HCT116 (cell line): ENCODE measurements at regions of chr13 and their contacts with region 1.

Region 1: DNA sequence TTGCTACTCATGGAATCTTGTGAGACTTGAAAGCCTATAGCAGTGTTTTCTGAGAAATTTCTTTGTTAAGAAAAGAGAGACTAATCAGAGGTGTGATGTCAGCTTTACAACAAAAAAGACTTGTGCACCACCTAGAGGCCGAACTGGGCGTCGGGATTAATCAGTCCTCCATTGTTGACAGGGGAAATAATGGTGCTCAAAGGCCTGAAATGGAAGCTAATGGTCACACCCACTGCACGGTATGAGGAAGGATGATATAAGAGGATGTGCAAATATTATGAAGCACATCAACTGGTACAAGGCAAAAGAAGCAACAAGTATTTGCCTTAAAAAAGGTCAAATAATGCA is 480.2 kb upstream of the MIR17HG start:
- DNase-seq: peak; percentile 33
- ATAC-seq: peak; percentile 86
- H3K4me3 ChIP-seq: no peak overlapping the region
- H3K27ac ChIP-seq: no peak overlapping the region
- H3K4me1 ChIP-seq: no peaks in the 10 kb centered on the region
- H3K27me3 ChIP-seq: no peaks in the 10 kb centered on the region
- CTCF ChIP-seq: peak; percentile 18 to 65 (median 52); a peak in 3 of 6 replicates
- POLR2A ChIP-seq: no peak
- RAD21 ChIP-seq: peak; percentile 63

Region 2: DNA sequence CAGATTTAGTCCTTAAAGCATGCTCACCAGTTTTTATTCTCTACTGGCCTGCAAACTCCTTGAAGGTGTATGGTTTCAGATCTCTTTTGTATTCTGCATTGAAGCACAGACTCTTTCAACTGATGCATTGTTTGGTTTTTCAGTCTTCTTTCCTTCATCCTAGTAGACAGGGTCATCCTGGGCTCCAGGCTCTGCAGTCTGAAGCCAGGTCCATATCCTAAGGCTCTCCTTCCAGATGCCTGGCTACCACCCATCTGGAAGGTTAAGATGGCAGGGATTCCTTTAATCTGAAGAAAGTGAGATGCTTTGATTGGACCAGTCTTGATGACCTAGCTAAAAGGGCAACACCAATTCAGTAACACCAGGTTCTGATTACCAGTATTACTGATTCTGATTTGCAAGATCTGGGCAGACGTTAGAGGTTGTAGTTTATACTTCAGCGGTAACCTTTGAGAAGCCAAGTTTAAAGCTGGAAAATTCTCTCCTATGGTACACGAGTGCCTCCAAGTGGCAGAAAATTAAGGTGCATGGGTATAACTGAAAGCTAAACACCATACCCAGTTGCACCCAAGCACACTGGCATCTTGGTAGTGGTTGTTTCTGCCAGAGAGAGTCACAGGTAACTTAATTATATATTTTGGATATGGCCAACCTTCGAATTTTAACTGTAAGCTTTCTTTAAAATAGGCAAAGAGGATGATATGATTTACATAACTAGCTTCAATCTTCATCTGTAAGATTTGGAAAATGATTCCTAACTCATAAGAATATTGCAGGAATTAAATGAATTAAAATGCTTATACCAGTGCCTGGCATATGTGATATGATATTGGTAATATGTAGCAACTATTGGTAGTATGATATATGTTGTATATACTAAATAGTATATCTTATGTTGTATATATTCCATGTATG is 1171.7 kb before region 1 on chr13:
- CTCF ChIA-PET with region 1: interaction called, 6 read pairs
- POLR2A ChIA-PET with region 1: no interaction called
- RAD21 ChIA-PET with region 1: no interaction called
- intact Hi-C with region 1: loop called (anchors 5 kb)
- DNase-seq: peak; percentile 22
- ATAC-seq: peak; percentile 68
- H3K4me3 ChIP-seq: no peak overlapping the region
- H3K27ac ChIP-seq: no peak overlapping the region
- H3K4me1 ChIP-seq: no peaks in the 10 kb centered on the region
- H3K27me3 ChIP-seq: no peaks in the 10 kb centered on the region
- CTCF ChIP-seq: peak; percentile 11 to 68 (median 56); a peak in 3 of 6 replicates
- POLR2A ChIP-seq: no peak
- RAD21 ChIP-seq: peak; percentile 61

Region 3: GRCh38 chr13:89740994-89741685 is 1126.2 kb before region 1 on chr13:
- CTCF ChIA-PET with region 1: no interaction called
- POLR2A ChIA-PET with region 1: no interaction called
- RAD21 ChIA-PET with region 1: no interaction called
- intact Hi-C with region 1: no loop called
- DNase-seq: no peak
- ATAC-seq: no peak
- H3K4me3 ChIP-seq: no peak overlapping the region
- H3K27ac ChIP-seq: no peak overlapping the region
- H3K4me1 ChIP-seq: no peaks in the 10 kb centered on the region
- H3K27me3 ChIP-seq: no peaks in the 10 kb centered on the region
- CTCF ChIP-seq: no peak
- POLR2A ChIP-seq: no peak
- RAD21 ChIP-seq: no peak

Region 4: GRCh38 chr13:89940383-89940782 is 926.9 kb before region 1 on chr13:
- CTCF ChIA-PET with region 1: no interaction called
- POLR2A ChIA-PET with region 1: no interaction called
- RAD21 ChIA-PET with region 1: no interaction called
- intact Hi-C with region 1: loop called (anchors 10 kb)
- DNase-seq: no peak
- ATAC-seq: no peak
- H3K4me3 ChIP-seq: no peak overlapping the region
- H3K27ac ChIP-seq: no peak overlapping the region
- H3K4me1 ChIP-seq: no peaks in the 10 kb centered on the region
- H3K27me3 ChIP-seq: no peaks in the 10 kb centered on the region
- CTCF ChIP-seq: no peak
- POLR2A ChIP-seq: no peak
- RAD21 ChIP-seq: no peak

Region 5: GRCh38 chr13:90293793-90294361 is 573.4 kb before region 1 on chr13:
- CTCF ChIA-PET with region 1: no interaction called
- POLR2A ChIA-PET with region 1: no interaction called
- RAD21 ChIA-PET with region 1: no interaction called
- intact Hi-C with region 1: no loop called
- DNase-seq: no peak
- ATAC-seq: no peak
- H3K4me3 ChIP-seq: no peak overlapping the region
- H3K27ac ChIP-seq: no peak overlapping the region
- H3K4me1 ChIP-seq: no peaks in the 10 kb centered on the region
- H3K27me3 ChIP-seq: no peaks in the 10 kb centered on the region
- CTCF ChIP-seq: no peak
- POLR2A ChIP-seq: no peak
- RAD21 ChIP-seq: no peak

Region 6: GRCh38 chr13:90552702-90553101 is 314.6 kb before region 1 on chr13:
- CTCF ChIA-PET with region 1: no interaction called
- POLR2A ChIA-PET with region 1: no interaction called
- RAD21 ChIA-PET with region 1: no interaction called
- intact Hi-C with region 1: no loop called
- DNase-seq: no peak
- ATAC-seq: no peak
- H3K4me3 ChIP-seq: no peak overlapping the region
- H3K27ac ChIP-seq: no peak overlapping the region
- H3K4me1 ChIP-seq: no peaks in the 10 kb centered on the region
- H3K27me3 ChIP-seq: no peaks in the 10 kb centered on the region
- CTCF ChIP-seq: no peak
- POLR2A ChIP-seq: no peak
- RAD21 ChIP-seq: no peak

Region 7: GRCh38 chr13:91017031-91017668 is 149.8 kb after region 1 on chr13:
- CTCF ChIA-PET with region 1: no interaction called
- POLR2A ChIA-PET with region 1: no interaction called
- RAD21 ChIA-PET with region 1: no interaction called
- intact Hi-C with region 1: loop called (anchors 5 kb)
- DNase-seq: peak; percentile 34
- ATAC-seq: peak; percentile 92
- H3K4me3 ChIP-seq: peak overlapping the region; percentile 10 to 36
- H3K27ac ChIP-seq: no peak overlapping the region
- H3K4me1 ChIP-seq: no peaks in the 10 kb centered on the region
- H3K27me3 ChIP-seq: no peaks in the 10 kb centered on the region
- CTCF ChIP-seq: peak; percentile 28 to 77 (median 63); a peak in 5 of 6 replicates
- POLR2A ChIP-seq: no peak
- RAD21 ChIP-seq: peak; percentile 65

Region 8: DNA sequence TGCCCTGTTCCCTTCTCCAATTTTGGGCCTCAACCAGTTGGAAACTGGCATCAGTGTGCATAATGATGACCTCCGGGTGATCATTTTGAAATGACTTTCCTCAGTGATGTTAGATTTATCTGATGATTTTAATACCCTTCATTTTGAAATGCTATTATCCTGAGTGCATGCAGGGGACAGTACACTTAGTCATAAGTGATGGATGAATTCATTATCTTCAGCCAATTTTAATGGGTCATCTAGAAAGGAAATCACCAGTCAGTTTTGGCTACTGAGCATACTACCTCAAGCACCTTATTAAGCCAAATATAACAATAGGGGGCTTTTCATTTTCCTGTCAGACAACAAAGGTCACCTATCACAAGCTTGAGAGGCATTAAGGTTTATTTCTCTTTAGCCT is 361.6 kb after region 1 on chr13:
- CTCF ChIA-PET with region 1: no interaction called
- POLR2A ChIA-PET with region 1: no interaction called
- RAD21 ChIA-PET with region 1: no interaction called
- intact Hi-C with region 1: no loop called
- DNase-seq: no peak
- ATAC-seq: no peak
- H3K4me3 ChIP-seq: no peak overlapping the region
- H3K27ac ChIP-seq: no peak overlapping the region
- H3K4me1 ChIP-seq: no peaks in the 10 kb centered on the region
- H3K27me3 ChIP-seq: peaks cover 8% of the 10 kb centered on the region; the same call in 1 of the 2 replicates
- CTCF ChIP-seq: no peak
- POLR2A ChIP-seq: no peak
- RAD21 ChIP-seq: no peak